Activated CD4-positive, alpha-beta memory T cell treated with anti-CD3 and anti-CD28 coated beads for 36 hours (primary cell): ENCODE measurements at regions of chr16 and their contacts with region 1.

Region 1: GRCh38 chr16:31440516-31441184 is 1.9 kb downstream of the ZNF843 start:
- DNase-seq: no peak
- H3K4me3 Mint-ChIP-seq: no peak overlapping the region
- H3K27ac Mint-ChIP-seq: no peak overlapping the region
- H3K4me1 Mint-ChIP-seq: peaks cover 17% of the 10 kb centered on the region
- H3K27me3 Mint-ChIP-seq: no peaks in the 10 kb centered on the region

Region 2: DNA sequence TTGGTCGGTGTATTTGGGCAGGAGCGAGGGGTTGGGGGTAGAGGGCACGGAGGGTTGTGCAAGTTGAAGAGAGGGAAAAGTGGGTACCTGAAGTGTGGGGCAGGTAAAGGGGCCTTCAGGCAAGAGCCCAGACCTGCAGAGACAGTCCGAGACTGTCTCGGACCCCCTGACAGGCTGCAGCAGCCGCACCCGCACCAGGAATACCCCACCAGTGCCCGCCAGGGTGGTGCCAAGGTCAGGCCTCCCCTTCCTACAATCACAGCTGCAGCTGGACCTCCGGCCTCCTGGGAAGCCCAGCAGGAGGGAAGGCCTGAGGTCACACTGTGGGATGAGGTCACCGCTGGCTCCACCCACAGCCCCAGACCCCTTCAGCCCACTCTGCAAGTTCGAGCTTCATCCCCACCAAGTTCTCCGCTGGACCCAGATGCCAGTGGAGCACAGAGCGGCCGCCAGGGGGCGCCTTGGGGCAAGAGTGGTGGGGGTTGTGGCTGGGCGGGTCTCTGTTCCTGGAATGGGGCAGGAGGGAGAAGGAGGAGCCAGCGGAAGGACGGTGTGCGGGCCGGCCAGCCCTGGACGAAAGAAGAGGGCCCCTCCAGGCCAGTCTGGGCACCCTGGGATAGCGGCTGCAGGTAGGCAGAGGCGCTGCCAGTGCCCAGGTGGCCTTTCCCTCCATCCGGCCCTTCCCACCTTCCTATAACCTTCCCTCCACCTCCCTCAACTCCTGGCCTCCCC is 455.8 kb before region 1 on chr16 and contains the start of gene HSD3B7:
- CTCF ChIA-PET with region 1: interaction called, 14 read pairs
- POLR2A ChIA-PET with region 1: no interaction called
- intact Hi-C with region 1: loop called (anchors 10 kb)
- DNase-seq: peak; percentile 88
- H3K4me3 Mint-ChIP-seq: no peak within 1 kb of the TSS
- H3K27ac Mint-ChIP-seq: no peak within 1 kb of the TSS
- H3K4me1 Mint-ChIP-seq: no peaks in the 10 kb centered on the region
- H3K27me3 Mint-ChIP-seq: no peaks in the 10 kb centered on the region
- total RNA-seq, gene HSD3B7: 2.2 TPM

Region 3: DNA sequence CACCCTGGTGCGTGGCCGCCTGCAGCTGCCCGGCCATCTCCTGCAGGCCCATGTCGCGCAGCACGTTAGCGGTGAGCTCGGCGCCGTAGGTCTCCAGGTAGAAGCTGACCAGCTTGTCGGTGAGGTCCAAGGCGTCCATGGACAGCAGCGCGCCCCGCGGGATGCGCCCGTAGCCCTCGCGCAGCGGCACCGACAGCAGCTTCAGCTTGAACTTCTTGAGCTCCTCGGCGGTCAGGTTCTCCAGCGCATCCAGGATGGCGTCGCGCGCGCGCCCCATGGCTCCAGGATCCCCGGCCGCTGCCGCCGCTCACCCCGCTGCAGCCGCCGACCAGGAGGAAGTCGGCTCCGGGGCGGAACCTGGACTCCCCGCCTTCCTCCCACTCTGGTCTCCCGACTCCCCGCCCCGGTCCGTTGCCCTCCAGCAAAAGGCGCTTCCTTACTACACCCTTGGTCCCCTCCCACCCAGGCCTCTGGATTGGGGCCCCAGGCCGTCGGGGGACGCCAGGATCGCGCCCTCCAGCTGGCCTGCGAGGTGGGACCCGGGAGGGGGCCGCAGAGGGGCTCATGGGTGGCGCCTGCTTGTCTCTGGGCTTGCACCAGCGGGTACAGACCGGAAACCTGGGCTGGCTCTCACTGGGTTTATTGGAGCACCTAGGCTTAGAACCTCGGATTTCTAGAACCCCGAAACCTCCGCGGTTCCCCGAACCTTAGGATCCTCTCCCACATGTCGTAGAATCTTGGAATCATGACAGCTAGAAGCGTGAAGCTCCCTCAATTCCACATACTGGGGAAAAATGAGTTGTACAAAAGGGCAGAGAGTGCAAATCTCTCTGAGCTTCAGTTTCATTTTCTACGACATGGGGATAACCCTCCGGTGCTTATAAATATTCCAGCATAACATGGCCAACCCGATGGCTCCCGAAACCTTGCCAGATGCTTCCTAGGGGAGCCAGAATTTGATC is 238.0 kb before region 1 on chr16 and contains the start of gene PYCARD:
- CTCF ChIA-PET with region 1: interaction called, 19 read pairs
- POLR2A ChIA-PET with region 1: no interaction called
- intact Hi-C with region 1: loop called (anchors 5 kb)
- DNase-seq: peak; percentile 49
- H3K4me3 Mint-ChIP-seq: peak within 1 kb of the TSS; percentile 78
- H3K27ac Mint-ChIP-seq: peak within 1 kb of the TSS; percentile 69
- H3K4me1 Mint-ChIP-seq: peaks cover 54% of the 10 kb centered on the region
- H3K27me3 Mint-ChIP-seq: no peaks in the 10 kb centered on the region
- total RNA-seq, gene PYCARD: 13.6 to 14.6 TPM

Region 4: DNA sequence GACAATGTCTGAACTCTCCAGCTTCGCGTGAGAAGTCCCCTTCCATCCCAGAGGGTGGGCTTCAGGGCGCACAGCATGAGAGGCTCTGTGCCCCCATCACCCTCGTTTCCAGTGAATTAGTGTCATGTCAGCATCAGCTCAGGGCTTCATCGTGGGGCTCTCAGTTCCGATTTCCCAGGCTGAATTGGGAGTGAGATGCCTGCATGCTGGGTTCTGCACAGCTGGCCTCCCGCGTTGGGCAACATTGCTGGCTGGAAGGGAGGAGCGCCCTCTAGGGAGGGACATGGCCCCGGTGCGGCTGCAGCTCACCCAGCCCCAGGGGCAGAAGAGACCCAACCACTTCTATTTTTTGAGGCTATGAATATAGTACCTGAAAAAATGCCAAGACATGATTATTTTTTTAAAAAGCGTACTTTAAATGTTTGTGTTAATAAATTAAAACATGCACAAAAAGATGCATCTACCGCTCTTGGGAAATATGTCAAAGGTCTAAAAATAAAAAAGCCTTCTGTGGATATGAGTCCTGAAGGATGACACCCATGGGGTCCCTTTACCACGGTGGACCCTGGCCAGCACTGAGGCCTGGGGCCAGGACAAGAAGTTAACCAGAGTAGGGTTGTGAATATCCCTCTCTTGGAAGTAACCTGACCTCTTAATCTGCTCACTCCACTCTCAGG is 58.0 kb before region 1 on chr16:
- CTCF ChIA-PET with region 1: interaction called, 12 read pairs
- POLR2A ChIA-PET with region 1: no interaction called
- intact Hi-C with region 1: loop called (anchors 5 kb)
- DNase-seq: peak; percentile 80
- H3K4me3 Mint-ChIP-seq: no peak overlapping the region
- H3K27ac Mint-ChIP-seq: no peak overlapping the region
- H3K4me1 Mint-ChIP-seq: peaks cover 22% of the 10 kb centered on the region
- H3K27me3 Mint-ChIP-seq: peaks cover 18% of the 10 kb centered on the region

Region 5: DNA sequence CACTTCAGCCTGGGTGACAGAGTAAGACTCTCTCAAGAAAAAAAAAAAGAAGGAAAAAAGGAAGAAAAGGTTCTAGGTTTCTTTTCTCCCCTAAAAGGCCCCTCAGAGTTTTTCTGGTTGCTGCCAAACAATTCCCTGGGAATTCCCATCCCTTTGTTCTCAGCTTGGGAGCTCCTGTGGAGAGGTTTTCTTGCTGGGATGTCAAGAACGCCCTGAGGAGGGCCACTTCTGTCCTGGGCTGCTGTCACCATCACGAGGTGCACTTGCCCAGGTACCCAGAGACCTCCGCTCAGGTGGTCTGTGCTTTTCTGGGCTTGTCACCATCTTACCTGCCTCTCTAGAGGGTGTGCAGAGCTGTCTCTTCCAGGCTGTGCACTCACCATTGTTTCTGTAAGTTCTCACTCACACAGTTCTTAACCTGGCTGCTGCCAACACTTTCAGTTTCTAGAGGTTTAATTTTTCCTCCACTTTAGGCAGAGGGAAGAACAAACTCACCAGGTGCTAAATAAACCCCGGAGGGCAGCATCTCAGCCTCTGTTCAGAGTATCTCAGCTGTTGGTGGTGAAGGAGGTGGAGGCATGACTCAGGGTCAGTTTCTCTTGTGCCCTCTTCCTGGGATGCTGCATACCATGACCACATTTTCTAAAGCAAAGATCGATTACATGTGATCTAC is 10.1 kb before region 1 on chr16:
- CTCF ChIA-PET with region 1: interaction called, 11 read pairs
- POLR2A ChIA-PET with region 1: interaction called, 6 read pairs
- intact Hi-C with region 1: no loop called
- DNase-seq: no peak
- H3K4me3 Mint-ChIP-seq: no peak overlapping the region
- H3K27ac Mint-ChIP-seq: peak overlapping the region; percentile 13
- H3K4me1 Mint-ChIP-seq: peaks cover 5% of the 10 kb centered on the region
- H3K27me3 Mint-ChIP-seq: peaks cover 4% of the 10 kb centered on the region

Region 6: GRCh38 chr16:31451681-31452351 is 11.2 kb after region 1 on chr16:
- CTCF ChIA-PET with region 1: interaction called, 16 read pairs
- POLR2A ChIA-PET with region 1: interaction called, 6 read pairs
- intact Hi-C with region 1: no loop called
- DNase-seq: peak; percentile 34
- H3K4me3 Mint-ChIP-seq: no peak overlapping the region
- H3K27ac Mint-ChIP-seq: no peak overlapping the region
- H3K4me1 Mint-ChIP-seq: peaks cover 30% of the 10 kb centered on the region
- H3K27me3 Mint-ChIP-seq: no peaks in the 10 kb centered on the region